AG04450 (cell line): ENCODE measurements at regions of chr1 and their contacts with region 1.

Region 1: DNA sequence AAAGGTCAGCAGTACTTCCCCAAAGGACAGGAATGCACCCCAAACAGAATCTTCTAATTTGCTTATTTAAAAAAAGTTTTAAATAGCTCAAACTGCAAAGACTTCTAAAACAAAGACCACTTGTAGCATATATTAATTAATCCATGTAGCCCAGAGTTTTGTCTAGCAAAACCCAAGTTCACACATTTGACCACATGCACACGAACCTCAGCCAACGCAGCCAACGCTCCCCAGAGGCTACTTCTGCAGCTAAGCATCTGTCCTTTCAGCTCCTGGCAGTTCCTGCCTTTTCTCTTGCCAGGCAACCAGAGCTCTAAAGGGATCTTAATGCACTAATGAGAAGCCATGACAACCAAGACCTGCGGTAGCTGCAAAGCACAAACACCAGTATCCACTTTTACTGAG is 89.6 kb downstream of the RERE start:
- DNase-seq: no peak
- H3K4me3 ChIP-seq: no peak overlapping the region
- H3K27ac ChIP-seq: no peak overlapping the region
- H3K27me3 ChIP-seq: no peaks in the 10 kb centered on the region
- CTCF ChIP-seq: no peak

Region 2: DNA sequence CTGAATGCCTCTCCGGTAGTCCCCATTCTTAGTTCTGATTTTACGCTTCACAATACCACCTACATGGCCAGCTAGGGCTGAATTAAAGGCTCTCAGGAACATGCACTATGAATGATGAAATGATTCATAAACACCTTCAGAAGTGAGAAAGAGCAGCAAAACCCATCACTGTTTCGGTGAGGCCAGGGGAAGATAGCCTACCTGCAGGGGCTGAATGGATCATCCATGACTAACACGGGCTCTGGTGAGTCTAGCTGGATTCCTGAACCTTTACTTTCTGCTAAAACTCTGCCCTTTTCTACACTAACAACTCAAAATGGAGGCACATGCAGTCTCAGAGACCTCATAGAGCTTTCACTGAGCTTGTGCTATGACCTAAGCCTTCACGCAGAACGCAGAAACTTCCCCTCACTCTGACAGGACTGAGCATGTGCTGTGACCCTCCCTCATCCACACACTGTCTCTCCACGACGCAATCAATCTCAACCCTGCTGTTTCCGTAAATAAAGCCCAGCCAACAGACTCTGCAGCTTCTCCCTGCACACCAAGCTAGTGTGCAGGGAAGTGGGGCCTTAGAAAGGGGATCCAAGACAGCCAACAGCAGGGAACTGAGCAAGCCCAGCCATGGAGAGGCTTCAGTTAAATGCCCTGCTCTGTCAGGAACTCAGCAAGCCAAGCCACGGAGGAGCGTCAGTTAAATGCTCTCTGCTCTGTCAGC is 202.1 kb before region 1 on chr1:
- CTCF ChIA-PET with region 1: interaction called, 4 read pairs
- POLR2A ChIA-PET with region 1: interaction called, 11 read pairs
- DNase-seq: peak; percentile 91
- H3K4me3 ChIP-seq: peak overlapping the region; percentile 64
- H3K27ac ChIP-seq: peak overlapping the region; percentile 71
- H3K27me3 ChIP-seq: no peaks in the 10 kb centered on the region
- CTCF ChIP-seq: no peak

Region 3: DNA sequence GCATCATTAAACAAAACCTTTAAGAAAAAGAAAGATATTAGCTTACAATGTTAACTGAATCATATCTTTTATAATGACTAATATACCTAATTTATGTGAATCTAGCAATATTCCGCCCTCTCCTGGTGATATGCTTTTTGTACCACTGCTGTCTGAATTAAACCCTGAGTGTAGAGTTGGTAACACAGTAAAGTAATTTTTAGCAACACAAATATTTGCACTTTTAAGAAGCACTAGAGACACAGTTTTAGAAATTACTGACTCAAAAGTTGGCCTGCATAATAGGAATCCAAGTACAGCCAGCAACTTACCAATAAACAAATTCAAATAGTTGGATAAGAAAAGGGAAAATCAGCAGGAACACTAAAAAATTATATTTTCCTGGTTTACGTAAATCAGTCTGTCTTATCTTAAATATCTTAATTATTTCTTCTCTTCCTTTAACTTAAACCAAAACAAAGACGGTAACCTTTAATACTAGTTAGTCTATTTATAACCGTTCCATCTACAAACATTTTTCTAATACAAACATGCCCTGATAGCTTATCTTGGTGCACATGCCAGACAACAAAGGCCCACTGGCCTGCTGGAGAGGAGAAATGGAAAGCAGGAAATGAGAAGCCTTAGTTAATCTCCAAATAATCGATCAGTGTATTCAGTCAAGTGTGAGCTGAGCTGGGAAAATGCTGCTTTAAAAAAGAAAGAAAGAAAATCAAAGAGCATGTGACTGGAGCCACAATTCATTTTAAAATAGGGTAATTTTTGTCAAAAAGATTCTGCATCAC is 156.4 kb before region 1 on chr1:
- CTCF ChIA-PET with region 1: interaction called, 30 read pairs
- POLR2A ChIA-PET with region 1: no interaction called
- DNase-seq: no peak
- H3K4me3 ChIP-seq: no peak overlapping the region
- H3K27ac ChIP-seq: no peak overlapping the region
- H3K27me3 ChIP-seq: no peaks in the 10 kb centered on the region
- CTCF ChIP-seq: peak; percentile 61

Region 4: GRCh38 chr1:8661185-8662110 is 66.4 kb before region 1 on chr1:
- CTCF ChIA-PET with region 1: no interaction called
- POLR2A ChIA-PET with region 1: interaction called, 12 read pairs
- DNase-seq: peak; percentile 52
- H3K4me3 ChIP-seq: peak overlapping the region; percentile 21
- H3K27ac ChIP-seq: peak overlapping the region; percentile 87
- H3K27me3 ChIP-seq: no peaks in the 10 kb centered on the region
- CTCF ChIP-seq: no peak

Region 5: GRCh38 chr1:8702850-8703810 is 24.7 kb before region 1 on chr1:
- CTCF ChIA-PET with region 1: interaction called, 11 read pairs
- POLR2A ChIA-PET with region 1: no interaction called
- DNase-seq: peak; percentile 68
- H3K4me3 ChIP-seq: peak overlapping the region; percentile 77
- H3K27ac ChIP-seq: peak overlapping the region; percentile 35
- H3K27me3 ChIP-seq: no peaks in the 10 kb centered on the region
- CTCF ChIP-seq: peak; percentile 11; the same call in 1 of the 2 replicates